B cell (primary cell): ENCODE measurements at regions of chr11 and their contacts with region 1.

Region 1: GRCh38 chr11:59429924-59430516 is 3.8 kb upstream of the OR5A2 start:
- DNase-seq: peak; percentile 86
- ATAC-seq: peak; percentile 87
- H3K4me3 ChIP-seq: no peak overlapping the region
- H3K4me3 Mint-ChIP-seq: no peak overlapping the region
- H3K27ac ChIP-seq: no peak overlapping the region
- H3K27ac Mint-ChIP-seq: no peak overlapping the region
- H3K4me1 ChIP-seq: no peaks in the 10 kb centered on the region
- H3K4me1 Mint-ChIP-seq: no peaks in the 10 kb centered on the region
- H3K27me3 ChIP-seq: no peaks in the 10 kb centered on the region
- H3K27me3 Mint-ChIP-seq: peaks cover 12% of the 10 kb centered on the region
- CTCF ChIP-seq: peak; percentile 93

Region 2: GRCh38 chr11:59142530-59143507 is 287.2 kb before region 1 on chr11 and contains the start of gene FAM111A:
- CTCF ChIA-PET with region 1: interaction called, 4 read pairs
- POLR2A ChIA-PET with region 1: no interaction called
- intact Hi-C with region 1: loop called (anchors 1 kb)
- DNase-seq: peak; percentile 91
- ATAC-seq: peak; percentile 74
- H3K4me3 ChIP-seq: peak within 1 kb of the TSS; percentile 82 to 94 (median 89)
- H3K4me3 Mint-ChIP-seq: peak within 1 kb of the TSS; percentile 97
- H3K27ac ChIP-seq: peak within 1 kb of the TSS; percentile 88 to 90
- H3K27ac Mint-ChIP-seq: peak within 1 kb of the TSS; percentile 87
- H3K4me1 ChIP-seq: peaks cover 40 to 45% of the 10 kb centered on the region in 2 donors
- H3K4me1 Mint-ChIP-seq: peaks cover 68% of the 10 kb centered on the region
- H3K27me3 ChIP-seq: no peaks in the 10 kb centered on the region
- H3K27me3 Mint-ChIP-seq: no peaks in the 10 kb centered on the region
- CTCF ChIP-seq: no peak
- total RNA-seq, gene FAM111A: 120 and 126 TPM in 2 replicates

Region 3: GRCh38 chr11:59197991-59198390 is 232.0 kb before region 1 on chr11:
- CTCF ChIA-PET with region 1: interaction called, 16 read pairs
- POLR2A ChIA-PET with region 1: no interaction called
- intact Hi-C with region 1: no loop called
- DNase-seq: no peak
- ATAC-seq: no peak
- H3K4me3 ChIP-seq: no peak overlapping the region
- H3K4me3 Mint-ChIP-seq: peak overlapping the region; percentile 23
- H3K27ac ChIP-seq: no peak overlapping the region
- H3K27ac Mint-ChIP-seq: peak overlapping the region; percentile 72
- H3K4me1 ChIP-seq: peaks cover 47 to 50% of the 10 kb centered on the region in 2 donors
- H3K4me1 Mint-ChIP-seq: peaks cover 74% of the 10 kb centered on the region
- H3K27me3 ChIP-seq: no peaks in the 10 kb centered on the region
- H3K27me3 Mint-ChIP-seq: no peaks in the 10 kb centered on the region
- CTCF ChIP-seq: no peak

Region 4: DNA sequence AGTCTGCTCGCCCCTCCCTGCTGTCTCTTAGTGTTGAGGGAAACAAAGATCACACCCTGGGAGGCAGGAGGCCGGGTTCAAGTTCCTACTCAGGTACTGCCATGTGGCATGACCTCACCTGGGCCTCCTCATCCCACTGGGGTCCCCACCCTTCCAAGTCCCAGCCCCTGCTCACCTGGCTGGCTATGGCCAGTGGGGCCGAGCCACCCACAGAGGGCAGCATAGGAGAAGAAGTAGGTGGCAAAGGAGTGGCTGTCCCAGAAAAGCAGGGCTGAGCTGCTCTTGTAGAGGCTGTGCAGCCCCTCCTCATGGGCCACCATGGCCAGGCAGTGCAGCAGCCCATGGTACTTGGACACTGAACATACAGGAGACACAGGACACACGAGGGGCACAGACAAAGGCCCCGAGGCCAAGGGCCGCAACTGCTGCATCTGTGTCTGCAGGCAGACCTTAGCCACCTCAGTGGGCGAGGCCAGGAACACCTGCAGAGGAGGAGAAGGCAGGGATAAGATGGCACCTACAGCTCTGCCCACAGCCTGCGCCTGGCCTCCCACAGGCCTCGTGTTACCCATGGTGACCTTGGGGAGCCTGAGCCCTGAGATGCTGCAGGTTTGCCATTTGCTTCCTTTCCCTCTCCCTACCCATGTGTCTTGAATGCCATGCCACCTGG is 166.7 kb before region 1 on chr11:
- CTCF ChIA-PET with region 1: interaction called, 131 read pairs
- POLR2A ChIA-PET with region 1: no interaction called
- intact Hi-C with region 1: loop called (anchors 1 kb)
- DNase-seq: peak; percentile 78
- ATAC-seq: peak; percentile 65
- H3K4me3 ChIP-seq: no peak overlapping the region
- H3K4me3 Mint-ChIP-seq: peak overlapping the region; percentile 50
- H3K27ac ChIP-seq: no peak overlapping the region
- H3K27ac Mint-ChIP-seq: peak overlapping the region; percentile 37
- H3K4me1 ChIP-seq: peaks cover 52 to 69% of the 10 kb centered on the region in 2 donors
- H3K4me1 Mint-ChIP-seq: peaks cover 68% of the 10 kb centered on the region
- H3K27me3 ChIP-seq: no peaks in the 10 kb centered on the region
- H3K27me3 Mint-ChIP-seq: no peaks in the 10 kb centered on the region
- CTCF ChIP-seq: peak; percentile 68

Region 5: DNA sequence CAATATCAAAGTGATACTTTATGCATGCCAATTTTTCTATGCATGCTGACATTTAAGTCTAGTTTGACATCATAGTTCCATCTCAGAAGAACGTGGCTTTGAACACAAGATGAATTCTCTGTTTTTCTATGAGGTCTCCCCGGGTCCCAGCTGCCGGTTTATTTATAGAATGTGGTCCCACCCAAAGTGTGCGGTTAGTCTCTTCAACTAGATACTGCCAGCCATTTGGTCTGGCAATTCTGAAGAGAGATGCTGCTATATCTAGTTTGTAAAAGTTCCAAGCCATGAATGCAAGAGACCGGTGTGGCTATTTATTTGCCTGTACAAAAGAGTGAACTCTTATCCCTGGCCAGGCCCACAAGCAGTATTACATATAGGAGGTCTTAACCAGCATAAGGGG is 13.0 kb before region 1 on chr11:
- CTCF ChIA-PET with region 1: interaction called, 41 read pairs
- POLR2A ChIA-PET with region 1: no interaction called
- intact Hi-C with region 1: no loop called
- DNase-seq: peak; percentile 46
- ATAC-seq: peak; percentile 67
- H3K4me3 ChIP-seq: peak overlapping the region in 2 of 5 experiments; percentile 25 to 31
- H3K4me3 Mint-ChIP-seq: peak overlapping the region; percentile 68
- H3K27ac ChIP-seq: peak overlapping the region; percentile 16 to 62
- H3K27ac Mint-ChIP-seq: peak overlapping the region; percentile 81
- H3K4me1 ChIP-seq: peaks cover 44% of the 10 kb centered on the region in 2 donors
- H3K4me1 Mint-ChIP-seq: peaks cover 38% of the 10 kb centered on the region
- H3K27me3 ChIP-seq: no peaks in the 10 kb centered on the region
- H3K27me3 Mint-ChIP-seq: no peaks in the 10 kb centered on the region
- CTCF ChIP-seq: no peak

Region 6: DNA sequence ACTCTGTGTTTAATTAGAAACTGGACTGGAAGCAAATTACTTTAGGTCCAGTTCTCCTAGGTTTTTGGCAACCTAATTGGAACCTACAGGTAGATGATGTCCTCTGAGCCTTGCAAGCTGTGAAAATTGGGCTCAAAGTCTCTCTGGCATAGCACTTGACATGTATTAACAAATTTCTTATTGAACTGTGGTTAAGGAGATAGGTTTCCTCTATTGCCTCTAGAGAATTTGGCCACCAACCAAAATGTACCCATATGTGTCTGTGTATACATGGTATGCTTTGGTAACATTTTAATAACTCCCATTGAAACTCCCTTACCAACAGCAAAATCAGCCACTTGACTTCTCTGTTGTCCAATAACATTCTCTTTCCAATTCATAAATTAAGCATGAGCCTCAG is 43.0 kb after region 1 on chr11 and contains the start of gene OR4D10:
- CTCF ChIA-PET with region 1: no interaction called
- POLR2A ChIA-PET with region 1: no interaction called
- intact Hi-C with region 1: no loop called
- DNase-seq: no peak
- ATAC-seq: no peak
- H3K4me3 ChIP-seq: no peak within 1 kb of the TSS
- H3K4me3 Mint-ChIP-seq: no peak within 1 kb of the TSS
- H3K27ac ChIP-seq: no peak within 1 kb of the TSS
- H3K27ac Mint-ChIP-seq: no peak within 1 kb of the TSS
- H3K4me1 ChIP-seq: peaks cover 4 to 5% of the 10 kb centered on the region in 2 donors
- H3K4me1 Mint-ChIP-seq: peaks cover 10% of the 10 kb centered on the region
- H3K27me3 ChIP-seq: no peaks in the 10 kb centered on the region
- H3K27me3 Mint-ChIP-seq: peaks cover 20% of the 10 kb centered on the region
- CTCF ChIP-seq: no peak
- total RNA-seq, gene OR4D10: not detected in 2 replicates